ENCODE measurements at regions of chr1 and their contacts with region 1.

Region 1: GRCh38 chr1:54273092-54273794 is 73.3 kb downstream of the MRPL37 start:
- DNase-seq: peak; percentile 81
- ATAC-seq: peak; percentile 45

Region 2: DNA sequence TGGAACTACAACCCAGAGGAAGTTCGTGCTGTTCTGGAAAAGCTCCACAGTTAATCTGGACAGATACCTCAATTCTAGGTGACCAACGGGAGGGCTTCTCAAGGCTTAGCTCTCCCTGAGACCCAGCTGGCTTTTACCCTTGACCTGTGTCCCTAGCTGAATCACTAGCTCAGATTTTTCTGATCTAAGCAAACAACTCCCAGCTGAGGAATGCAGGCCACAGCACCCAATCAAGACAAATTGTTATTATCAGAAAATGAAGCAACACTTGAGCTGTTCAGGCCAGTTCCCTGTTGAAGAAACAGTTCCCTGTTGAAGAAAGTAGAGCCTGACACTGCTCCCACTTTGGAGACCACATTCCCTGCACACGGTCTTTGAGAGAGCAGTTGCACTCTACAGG is 363.3 kb before region 1 on chr1:
- intact Hi-C with region 1: no loop called
- DNase-seq: no peak
- ATAC-seq: no peak

Region 3: DNA sequence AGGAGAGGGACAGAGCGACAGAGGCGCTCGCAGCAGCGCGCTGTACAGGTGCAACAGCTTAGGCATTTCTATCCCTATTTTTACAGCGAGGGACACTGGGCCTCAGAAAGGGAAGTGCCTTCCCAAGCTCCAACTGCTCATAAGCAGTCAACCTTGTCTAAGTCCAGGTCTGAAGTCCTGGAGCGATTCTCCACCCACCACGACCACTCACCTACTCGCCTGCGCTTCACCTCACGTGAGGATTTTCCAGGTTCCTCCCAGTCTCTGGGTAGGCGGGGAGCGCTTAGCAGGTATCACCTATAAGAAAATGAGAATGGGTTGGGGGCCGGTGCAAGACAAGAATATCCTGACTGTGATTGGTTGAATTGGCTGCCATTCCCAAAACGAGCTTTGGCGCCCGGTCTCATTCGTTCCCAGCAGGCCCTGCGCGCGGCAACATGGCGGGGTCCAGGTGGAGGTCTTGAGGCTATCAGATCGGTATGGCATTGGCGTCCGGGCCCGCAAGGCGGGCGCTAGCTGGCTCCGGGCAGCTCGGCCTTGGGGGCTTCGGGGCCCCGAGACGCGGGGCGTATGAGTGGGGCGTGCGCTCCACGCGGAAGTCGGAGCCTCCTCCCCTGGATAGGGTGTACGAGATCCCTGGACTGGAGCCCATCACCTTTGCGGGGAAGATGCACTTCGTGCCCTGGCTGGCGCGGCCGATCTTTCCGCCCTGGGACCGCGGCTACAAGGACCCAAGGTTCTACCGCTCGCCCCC is 73.3 kb before region 1 on chr1 and contains the starts of genes CYB5RL and MRPL37:
- intact Hi-C with region 1: loop called (anchors 5 kb)
- DNase-seq: peak; percentile 95
- ATAC-seq: peak; percentile 99
- total RNA-seq, gene CYB5RL: 3.9 TPM
- total RNA-seq, gene MRPL37: 85.2 TPM

Region 4: DNA sequence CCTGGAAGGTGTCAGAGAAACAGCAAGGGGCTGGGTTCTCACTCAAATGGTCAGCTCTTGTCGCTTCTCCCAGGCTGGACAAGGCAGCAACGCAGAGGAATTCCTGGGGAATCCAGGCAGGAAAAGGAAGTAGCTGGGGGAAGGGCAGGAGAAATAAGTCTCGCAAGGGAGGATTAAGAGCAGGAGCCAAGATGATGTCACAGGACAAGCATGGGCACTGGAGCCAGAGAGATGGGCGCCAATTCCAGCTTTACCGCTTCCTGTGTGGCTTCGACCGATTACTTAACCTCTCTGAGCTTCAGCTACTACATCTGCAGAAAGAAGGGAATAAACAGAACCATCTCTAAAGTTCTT is 62.5 kb after region 1 on chr1:
- intact Hi-C with region 1: loop called (anchors 2 kb)
- DNase-seq: peak; percentile 72
- ATAC-seq: peak; percentile 77

Region 5: GRCh38 chr1:54397090-54397591 is 123.9 kb after region 1 on chr1:
- intact Hi-C with region 1: loop called (anchors 2 kb)
- DNase-seq: peak; percentile 81
- ATAC-seq: peak; percentile 96